Posterior vena cava (tissue), 2 donors: ENCODE measurements at regions of chr9 and their contacts with region 1.

Region 1: GRCh38 chr9:109302606-109303005 is 18.3 kb downstream of the EPB41L4B start:
- DNase-seq: no peak

Region 2: GRCh38 chr9:109341565-109341964 is 39.0 kb after region 1 on chr9:
- intact Hi-C with region 1: loop called in 1 of 2 experiments (anchors 1 kb)
- DNase-seq: no peak

Region 3: GRCh38 chr9:109369285-109369684 is 66.7 kb after region 1 on chr9:
- intact Hi-C with region 1: no loop called
- DNase-seq: no peak